Caco-2 (cell line): ENCODE measurements at regions of chr3 and their contacts with region 1.

Region 1: DNA sequence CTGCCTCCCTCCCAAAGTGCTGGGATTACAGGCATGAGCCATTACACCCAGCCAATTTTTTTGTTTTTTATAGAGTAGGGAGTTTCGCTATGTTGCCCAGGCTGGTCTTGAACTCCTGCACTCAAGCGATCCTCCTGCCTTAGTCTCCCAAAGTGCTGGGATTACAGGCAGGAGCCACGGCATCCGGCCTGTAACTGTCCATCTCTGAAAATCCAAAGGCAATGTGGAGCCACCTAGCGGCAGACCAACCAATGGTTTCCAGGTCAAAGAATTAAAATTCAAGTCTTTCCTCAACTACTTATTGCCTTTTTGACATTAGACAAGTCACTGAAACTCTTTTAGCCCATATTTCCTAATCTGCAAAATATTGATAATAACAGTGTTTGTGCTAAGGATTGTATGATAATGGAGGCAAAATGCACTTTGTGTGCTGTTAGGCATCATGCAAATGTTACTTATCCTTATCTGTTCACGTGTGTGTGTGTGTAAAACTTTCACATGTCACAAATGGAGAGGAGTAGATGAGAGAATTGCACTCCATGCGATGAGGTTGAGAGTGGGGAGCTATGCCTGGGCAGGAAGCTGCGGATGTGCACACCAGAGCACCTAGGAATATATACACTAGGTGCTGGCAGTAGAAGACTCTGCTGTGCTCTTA is 48.7 kb downstream of the COL8A1 start:
- DNase-seq: peak; percentile 56 to 65
- H3K4me3 ChIP-seq: no peak overlapping the region
- H3K4me3 Mint-ChIP-seq: no peak overlapping the region
- H3K27ac Mint-ChIP-seq: no peak overlapping the region
- H3K4me1 ChIP-seq: no peaks in the 10 kb centered on the region
- H3K4me1 Mint-ChIP-seq: no peaks in the 10 kb centered on the region
- H3K27me3 ChIP-seq: no peaks in the 10 kb centered on the region; the same call in 1 of the 2 replicates
- H3K27me3 Mint-ChIP-seq: peaks cover 2% of the 10 kb centered on the region
- CTCF ChIP-seq: peak; percentile 54 to 72

Region 2: GRCh38 chr3:99532246-99532645 is 154.8 kb before region 1 on chr3:
- CTCF ChIA-PET with region 1: no interaction called
- POLR2A ChIA-PET with region 1: no interaction called
- intact Hi-C with region 1: no loop called
- DNase-seq: peak; percentile 54 to 66
- H3K4me3 ChIP-seq: no peak overlapping the region
- H3K4me3 Mint-ChIP-seq: no peak overlapping the region
- H3K27ac Mint-ChIP-seq: no peak overlapping the region
- H3K4me1 ChIP-seq: no peaks in the 10 kb centered on the region
- H3K4me1 Mint-ChIP-seq: no peaks in the 10 kb centered on the region
- H3K27me3 ChIP-seq: no peaks in the 10 kb centered on the region
- H3K27me3 Mint-ChIP-seq: no peaks in the 10 kb centered on the region
- CTCF ChIP-seq: peak; percentile 51 to 70

Region 3: GRCh38 chr3:99753268-99753975 is 66.3 kb after region 1 on chr3:
- CTCF ChIA-PET with region 1: no interaction called
- POLR2A ChIA-PET with region 1: no interaction called
- intact Hi-C with region 1: loop called (anchors 5 kb)
- DNase-seq: peak in 1 of 2 experiments; percentile 41
- H3K4me3 ChIP-seq: no peak overlapping the region
- H3K4me3 Mint-ChIP-seq: no peak overlapping the region
- H3K27ac Mint-ChIP-seq: no peak overlapping the region
- H3K4me1 ChIP-seq: no peaks in the 10 kb centered on the region
- H3K4me1 Mint-ChIP-seq: no peaks in the 10 kb centered on the region
- H3K27me3 ChIP-seq: no peaks in the 10 kb centered on the region; the same call in 1 of the 2 replicates
- H3K27me3 Mint-ChIP-seq: peaks cover 13% of the 10 kb centered on the region
- CTCF ChIP-seq: peak; percentile 68

Region 4: GRCh38 chr3:99765042-99765942 is 78.2 kb after region 1 on chr3:
- CTCF ChIA-PET with region 1: no interaction called
- POLR2A ChIA-PET with region 1: no interaction called
- intact Hi-C with region 1: no loop called
- DNase-seq: no peak
- H3K4me3 ChIP-seq: no peak overlapping the region
- H3K4me3 Mint-ChIP-seq: no peak overlapping the region
- H3K27ac Mint-ChIP-seq: no peak overlapping the region
- H3K4me1 ChIP-seq: no peaks in the 10 kb centered on the region
- H3K4me1 Mint-ChIP-seq: no peaks in the 10 kb centered on the region
- H3K27me3 ChIP-seq: no peaks in the 10 kb centered on the region
- H3K27me3 Mint-ChIP-seq: peaks cover 7% of the 10 kb centered on the region
- CTCF ChIP-seq: no peak